Activated B cell treated with CpG ODN at 0.5 μM for 24 hours (primary cell): ENCODE measurements at regions of chr1 and their contacts with region 1.

Region 1: GRCh38 chr1:244451951-244452795 is 464 bp upstream of the ADSS2 start:
- DNase-seq: peak; percentile 97
- ATAC-seq: peak; percentile 94
- H3K4me3 Mint-ChIP-seq: peak overlapping the region; percentile 95
- H3K27ac Mint-ChIP-seq: peak overlapping the region; percentile 78
- H3K4me1 Mint-ChIP-seq: peaks cover 32% of the 10 kb centered on the region
- H3K27me3 Mint-ChIP-seq: no peaks in the 10 kb centered on the region
- CTCF ChIP-seq: no peak

Region 2: DNA sequence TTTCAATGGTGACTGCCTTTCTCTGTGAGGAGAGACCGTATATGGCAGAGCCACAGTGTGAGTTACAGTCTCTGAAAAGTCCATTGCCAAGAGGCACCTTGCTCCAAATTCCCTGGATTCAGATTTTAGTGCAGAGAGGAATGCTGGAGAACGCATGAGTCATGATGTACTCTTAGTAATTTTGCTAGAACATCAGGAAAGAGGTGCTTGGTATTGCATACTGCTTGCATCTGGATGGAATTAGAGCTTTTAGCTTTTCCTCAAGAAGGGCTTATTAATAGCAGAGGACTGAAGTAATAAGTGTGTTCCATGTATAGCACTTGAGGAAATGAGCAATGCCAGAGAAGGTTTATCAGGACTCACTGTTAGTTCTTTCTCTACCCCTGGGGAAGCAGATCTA is 561.6 kb before region 1 on chr1:
- CTCF ChIA-PET with region 1: no interaction called
- POLR2A ChIA-PET with region 1: no interaction called
- intact Hi-C with region 1: no loop called
- DNase-seq: no peak
- ATAC-seq: no peak
- H3K4me3 Mint-ChIP-seq: no peak overlapping the region
- H3K27ac Mint-ChIP-seq: no peak overlapping the region
- H3K4me1 Mint-ChIP-seq: no peaks in the 10 kb centered on the region
- H3K27me3 Mint-ChIP-seq: peaks cover 6% of the 10 kb centered on the region
- CTCF ChIP-seq: no peak

Region 3: GRCh38 chr1:244302889-244303613 is 149.1 kb before region 1 on chr1:
- CTCF ChIA-PET with region 1: no interaction called
- POLR2A ChIA-PET with region 1: interaction called, 6 read pairs
- intact Hi-C with region 1: loop called (anchors 1 kb)
- DNase-seq: no peak
- ATAC-seq: no peak
- H3K4me3 Mint-ChIP-seq: no peak overlapping the region
- H3K27ac Mint-ChIP-seq: no peak overlapping the region
- H3K4me1 Mint-ChIP-seq: peaks cover 19% of the 10 kb centered on the region
- H3K27me3 Mint-ChIP-seq: no peaks in the 10 kb centered on the region
- CTCF ChIP-seq: no peak

Region 4: GRCh38 chr1:244435562-244436205 is 16.5 kb before region 1 on chr1:
- CTCF ChIA-PET with region 1: no interaction called
- POLR2A ChIA-PET with region 1: no interaction called
- intact Hi-C with region 1: loop called (anchors 2 kb)
- DNase-seq: no peak
- ATAC-seq: no peak
- H3K4me3 Mint-ChIP-seq: no peak overlapping the region
- H3K27ac Mint-ChIP-seq: no peak overlapping the region
- H3K4me1 Mint-ChIP-seq: peaks cover 11% of the 10 kb centered on the region
- H3K27me3 Mint-ChIP-seq: no peaks in the 10 kb centered on the region
- CTCF ChIP-seq: no peak

Region 5: DNA sequence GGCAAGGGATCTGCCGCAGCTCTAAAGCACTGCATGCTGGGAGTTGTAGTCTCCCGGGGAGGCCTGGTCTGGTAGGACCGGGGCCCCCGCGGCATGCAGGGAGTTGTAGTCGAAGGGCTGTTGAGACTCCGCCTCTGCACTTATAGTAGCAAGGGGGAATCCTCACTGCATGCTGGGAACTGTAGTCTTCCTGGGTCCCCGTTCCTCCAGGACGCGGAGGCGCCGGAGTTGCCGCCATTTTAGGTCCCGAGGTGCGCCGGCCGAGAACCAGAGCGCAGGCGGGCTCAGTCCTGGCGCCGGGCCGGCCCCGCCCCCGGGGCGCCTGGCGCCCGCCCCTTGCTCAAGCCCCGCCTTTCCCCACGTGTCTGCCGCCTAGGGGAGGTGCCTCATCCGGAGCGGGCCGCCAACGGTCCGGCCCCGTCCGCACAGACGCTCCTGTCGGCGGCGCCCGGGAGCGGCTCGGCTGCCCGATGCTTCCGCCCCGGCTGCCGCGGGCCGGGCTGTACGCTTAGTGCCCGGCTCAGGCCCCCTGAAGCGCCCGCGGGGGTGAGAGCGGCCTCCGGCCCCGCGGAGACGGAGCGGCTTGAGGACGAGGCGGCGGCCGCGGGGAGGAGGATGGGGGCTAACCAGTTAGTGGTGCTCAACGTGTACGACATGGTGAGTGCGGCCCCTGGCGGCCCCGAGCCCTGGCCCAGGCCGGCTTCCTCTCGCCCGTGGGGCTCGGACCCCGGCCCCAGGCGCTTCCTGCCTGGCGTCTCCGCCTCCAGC is 200.7 kb after region 1 on chr1 and contains the start of gene DESI2:
- CTCF ChIA-PET with region 1: no interaction called
- POLR2A ChIA-PET with region 1: no interaction called
- intact Hi-C with region 1: loop called (anchors 1 kb)
- DNase-seq: peak; percentile 98
- ATAC-seq: peak; percentile 91
- H3K4me3 Mint-ChIP-seq: peak within 1 kb of the TSS; percentile 86
- H3K27ac Mint-ChIP-seq: peak within 1 kb of the TSS; percentile 88
- H3K4me1 Mint-ChIP-seq: peaks cover 18% of the 10 kb centered on the region
- H3K27me3 Mint-ChIP-seq: no peaks in the 10 kb centered on the region
- CTCF ChIP-seq: no peak
- total RNA-seq, gene DESI2: 24.2 and 25.8 TPM in 2 replicates